ENCODE measurements at regions of chr3 and their contacts with region 1.

Region 1: GRCh38 chr3:143951351-143951971 is 20.2 kb upstream of the DIPK2A start:
- H3K4me3 Mint-ChIP-seq: no peak overlapping the region
- H3K27ac Mint-ChIP-seq: no peak overlapping the region
- H3K4me1 Mint-ChIP-seq: no peaks in the 10 kb centered on the region
- H3K27me3 Mint-ChIP-seq: no peaks in the 10 kb centered on the region

Region 2: GRCh38 chr3:143775459-143775858 is 176.0 kb before region 1 on chr3:
- intact Hi-C with region 1: loop called (anchors 1 kb)
- H3K4me3 Mint-ChIP-seq: no peak overlapping the region
- H3K27ac Mint-ChIP-seq: no peak overlapping the region
- H3K4me1 Mint-ChIP-seq: no peaks in the 10 kb centered on the region
- H3K27me3 Mint-ChIP-seq: no peaks in the 10 kb centered on the region

Measured in dendritic cell treated with granulocyte-macrophage colony-stimulating factor and Interleukin-4, amounts not matched to agents 40 ng/mL and 50 ng/mL, for 4 days (primary cell).